CD8-positive, alpha-beta memory T cell (primary cell): ENCODE measurements at regions of chr12 and their contacts with region 1.

Region 1: DNA sequence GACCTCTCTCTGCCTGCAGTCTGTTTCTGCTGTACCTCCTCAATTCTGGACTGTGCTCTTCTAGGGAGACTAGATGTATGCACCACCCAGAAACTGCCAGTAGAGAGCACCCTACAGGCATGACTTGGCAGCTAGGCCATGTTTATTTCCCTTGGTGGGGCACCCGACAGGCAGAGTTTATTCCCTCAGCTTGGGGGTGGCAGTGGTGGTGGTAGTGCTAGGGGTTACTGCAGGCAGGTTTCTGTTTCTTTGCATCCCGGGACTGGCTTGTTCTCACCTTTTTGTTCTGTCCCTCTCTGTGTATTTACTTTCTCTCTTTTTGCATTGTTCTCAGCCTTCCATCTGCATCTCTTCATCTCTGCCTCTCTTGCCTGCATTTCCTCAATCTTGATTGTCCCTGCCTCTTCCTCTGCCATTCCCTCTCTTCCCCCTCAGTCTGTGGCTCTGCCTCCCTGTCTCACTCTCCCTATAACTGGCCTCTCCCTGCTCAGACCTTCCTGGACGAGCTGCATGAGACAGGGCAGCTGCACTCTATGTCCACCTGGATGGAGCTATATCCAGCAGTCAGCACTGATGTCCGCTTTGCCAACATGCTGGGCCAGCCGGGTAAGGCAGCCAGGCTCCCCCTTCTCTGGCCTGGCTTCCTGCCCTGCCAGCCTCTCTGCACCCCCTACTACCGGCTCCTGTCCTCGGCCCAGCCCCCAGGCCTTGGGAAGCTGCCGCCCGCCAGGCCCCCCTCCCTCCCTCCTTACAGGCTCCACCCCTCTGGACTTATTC is 13.8 kb downstream of the PRPF40B start:
- DNase-seq: peak; percentile 28 to 74 (median 35)
- H3K4me3 ChIP-seq: no peak overlapping the region
- H3K4me3 Mint-ChIP-seq: no peak overlapping the region
- H3K27ac ChIP-seq: no peak overlapping the region
- H3K27ac Mint-ChIP-seq: peak overlapping the region in 5 of 8 donors; percentile 0 to 81 (median 51)
- H3K4me1 ChIP-seq: peaks cover 13% of the 10 kb centered on the region
- H3K4me1 Mint-ChIP-seq: peaks cover 15 to 19% (median 18%) of the 10 kb centered on the region in 3 donors
- H3K27me3 ChIP-seq: no peaks in the 10 kb centered on the region
- H3K27me3 Mint-ChIP-seq: no peaks in the 10 kb centered on the region

Region 2: GRCh38 chr12:49609059-49609745 is 28.0 kb before region 1 on chr12:
- CTCF ChIA-PET with region 1: no interaction called
- POLR2A ChIA-PET with region 1: no interaction called
- DNase-seq: no peak
- H3K4me3 ChIP-seq: no peak overlapping the region
- H3K4me3 Mint-ChIP-seq: no peak overlapping the region
- H3K27ac ChIP-seq: no peak overlapping the region
- H3K27ac Mint-ChIP-seq: peak overlapping the region in 1 of 8 donors; percentile 51
- H3K4me1 ChIP-seq: no peaks in the 10 kb centered on the region
- H3K4me1 Mint-ChIP-seq: no peaks in the 10 kb centered on the region
- H3K27me3 ChIP-seq: no peaks in the 10 kb centered on the region
- H3K27me3 Mint-ChIP-seq: peaks cover 11 to 30% of the 10 kb centered on the region in 2 donors

Region 3: DNA sequence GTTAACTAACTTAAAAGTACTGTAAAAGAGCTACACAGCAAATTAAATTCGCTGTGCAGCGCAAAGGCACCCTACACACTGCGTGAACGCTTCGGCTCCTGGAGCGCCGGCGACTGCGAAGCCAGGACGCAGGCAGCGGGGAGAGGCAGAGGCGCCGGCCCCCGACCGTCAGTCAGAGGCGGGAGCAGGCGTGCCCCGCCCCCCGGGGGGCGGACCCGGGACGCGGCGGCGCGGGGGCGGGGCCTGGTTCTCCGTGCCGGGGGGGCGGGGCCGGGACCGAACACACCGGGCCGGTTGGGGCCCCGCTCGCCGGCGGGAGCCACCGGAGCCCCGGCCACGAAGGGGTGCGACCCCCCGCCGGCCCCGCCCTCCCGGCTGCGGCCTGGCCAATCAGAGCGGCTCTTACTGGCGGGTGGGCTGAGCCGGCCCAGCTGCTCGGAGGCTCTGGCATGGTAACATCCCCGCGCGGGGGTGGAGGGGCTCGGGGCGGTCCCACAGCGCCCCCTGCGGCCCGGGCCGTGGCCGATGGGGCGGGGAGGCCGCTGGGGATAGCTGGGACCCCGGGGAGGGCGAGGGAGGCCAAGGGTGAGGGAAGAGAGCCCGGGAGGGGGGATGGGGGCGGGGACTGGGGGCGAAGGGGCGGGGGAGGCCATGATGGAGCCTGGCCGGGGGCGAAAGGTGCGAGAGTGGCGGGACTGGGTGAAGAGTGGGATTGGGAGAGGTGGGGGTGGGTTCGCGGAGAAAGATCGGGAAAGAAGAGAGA is 13.8 kb before region 1 on chr12 and contains the start of gene PRPF40B:
- CTCF ChIA-PET with region 1: interaction called, 42 read pairs
- POLR2A ChIA-PET with region 1: interaction called, 7 read pairs
- DNase-seq: peak; percentile 80 to 90 (median 87)
- H3K4me3 ChIP-seq: peak within 1 kb of the TSS; percentile 70
- H3K4me3 Mint-ChIP-seq: peak within 1 kb of the TSS; percentile 83 to 93 (median 89)
- H3K27ac ChIP-seq: peak within 1 kb of the TSS; percentile 49
- H3K27ac Mint-ChIP-seq: peak within 1 kb of the TSS; percentile 86 to 97 (median 95)
- H3K4me1 ChIP-seq: peaks cover 18% of the 10 kb centered on the region
- H3K4me1 Mint-ChIP-seq: peaks cover 22 to 32% (median 31%) of the 10 kb centered on the region in 3 donors
- H3K27me3 ChIP-seq: no peaks in the 10 kb centered on the region
- H3K27me3 Mint-ChIP-seq: peaks cover 0 to 4% of the 10 kb centered on the region in 2 donors
- total RNA-seq, gene PRPF40B: 9.0 to 9.9 TPM

Region 4: DNA sequence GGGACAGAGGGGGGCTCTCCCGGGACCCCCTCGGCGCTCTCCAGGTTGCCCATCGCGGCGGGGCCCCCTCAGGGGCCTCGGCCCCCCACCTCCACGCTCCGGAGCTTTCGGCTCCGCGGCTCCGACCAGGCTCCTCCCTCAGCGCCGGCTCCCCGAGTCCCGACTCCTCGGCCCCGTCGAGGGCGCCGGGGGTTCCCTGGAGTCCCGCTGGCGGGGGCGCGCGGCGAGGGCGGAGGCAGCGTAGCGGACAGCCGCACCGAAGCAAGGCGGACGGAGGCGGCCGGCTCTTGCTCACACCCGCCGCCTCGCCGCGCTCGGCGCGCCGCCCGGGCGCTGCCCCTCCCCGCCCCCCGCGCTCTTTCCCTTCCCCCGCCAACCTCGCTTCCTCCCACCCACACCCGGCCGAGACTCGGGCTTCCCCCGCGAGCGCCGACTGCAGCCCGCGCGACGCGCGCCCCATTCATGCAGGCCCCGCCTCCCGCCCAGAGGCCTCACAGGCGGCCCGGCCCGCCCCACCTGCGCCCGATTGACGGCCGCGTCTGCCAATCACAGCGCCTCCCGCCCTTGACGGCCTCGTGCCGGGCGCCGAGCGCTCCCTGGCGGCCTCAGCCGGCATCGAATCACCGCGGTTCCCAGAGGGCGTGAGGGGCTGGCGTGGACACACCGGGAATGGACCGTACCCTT is 70.1 kb after region 1 on chr12 and contains the start of gene FMNL3:
- CTCF ChIA-PET with region 1: interaction called, 248 read pairs
- POLR2A ChIA-PET with region 1: interaction called, 3 read pairs
- DNase-seq: peak; percentile 97 to 99 (median 99)
- H3K4me3 ChIP-seq: peak within 1 kb of the TSS; percentile 72
- H3K4me3 Mint-ChIP-seq: peak within 1 kb of the TSS; percentile 87 to 96 (median 91)
- H3K27ac ChIP-seq: peak within 1 kb of the TSS; percentile 76
- H3K27ac Mint-ChIP-seq: peak within 1 kb of the TSS; percentile 33 to 95 (median 90)
- H3K4me1 ChIP-seq: peaks cover 39% of the 10 kb centered on the region
- H3K4me1 Mint-ChIP-seq: peaks cover 39 to 45% (median 44%) of the 10 kb centered on the region in 3 donors
- H3K27me3 ChIP-seq: no peaks in the 10 kb centered on the region
- H3K27me3 Mint-ChIP-seq: peaks cover 5 to 6% of the 10 kb centered on the region in 2 donors
- total RNA-seq, gene FMNL3: 35.8 to 36.7 TPM